HepG2 (cell line): ENCODE measurements at regions of chr2 and their contacts with region 1.

Region 1: DNA sequence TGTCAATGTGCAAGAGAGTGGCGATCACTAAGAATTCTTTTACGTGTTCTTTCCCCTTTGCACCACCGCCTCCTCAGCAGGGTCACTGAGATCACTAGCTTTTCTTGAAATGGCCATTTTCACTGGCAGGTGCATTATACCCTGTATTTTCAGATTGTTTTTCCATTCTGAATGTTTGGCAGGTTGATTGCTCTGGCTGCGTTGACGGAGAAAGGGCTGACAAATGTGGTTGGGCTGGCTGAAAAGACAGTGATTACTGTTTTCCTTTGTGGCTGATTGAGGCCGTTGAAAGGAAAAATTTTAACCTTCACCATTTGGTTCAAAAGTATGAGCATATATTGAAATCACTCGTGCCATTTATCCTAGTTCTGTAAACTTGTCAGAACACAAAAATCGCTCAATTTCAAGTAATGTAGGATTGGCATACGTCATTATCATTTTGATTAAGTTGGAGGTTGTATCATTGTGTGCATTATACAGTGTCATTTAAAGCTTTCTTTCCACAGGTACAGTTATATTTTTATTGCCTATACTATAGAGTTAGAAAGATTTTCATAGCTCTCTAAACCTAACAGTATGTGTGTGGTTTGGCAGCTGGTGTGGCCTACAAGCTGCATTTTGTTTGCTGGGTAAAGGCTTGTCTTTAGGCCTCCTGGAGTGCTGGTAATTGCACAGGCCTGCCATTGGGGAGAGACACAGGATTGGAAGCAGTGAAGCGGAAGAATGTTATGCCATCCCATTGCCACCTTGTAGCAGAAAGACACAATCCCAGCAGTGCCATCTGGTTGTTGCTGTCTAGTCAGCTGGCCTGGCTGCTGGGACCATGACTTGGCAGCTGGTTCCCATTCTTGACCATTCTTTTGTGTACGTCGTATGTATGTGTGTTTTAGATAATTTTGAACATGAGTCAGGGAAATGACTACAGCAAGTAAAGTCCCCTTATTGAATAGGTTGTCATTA is 36.7 kb downstream of the DYNC1I2 start:
- DNase-seq: peak; percentile 12
- ATAC-seq: peak; percentile 75
- H3K4me3 ChIP-seq: no peak overlapping the region
- H3K27ac ChIP-seq: no peak overlapping the region
- H3K4me1 ChIP-seq: peaks cover 23% of the 10 kb centered on the region
- H3K27me3 ChIP-seq: no peaks in the 10 kb centered on the region
- CTCF ChIP-seq: peak; percentile 60
- EP300 ChIP-seq: no peak
- POLR2A ChIP-seq: no peak
- RAD21 ChIP-seq: peak; percentile 26; the same call in 1 of the 2 replicates

Region 2: GRCh38 chr2:171735991-171736710 is 12.1 kb after region 1 on chr2:
- CTCF ChIA-PET with region 1: no interaction called
- POLR2A ChIA-PET with region 1: no interaction called
- in situ Hi-C with region 1: no loop called
- intact Hi-C with region 1: no loop called
- DNase-seq: peak; percentile 6
- ATAC-seq: no peak
- H3K4me3 ChIP-seq: no peak overlapping the region
- H3K27ac ChIP-seq: no peak overlapping the region
- H3K4me1 ChIP-seq: peaks cover 14% of the 10 kb centered on the region
- H3K27me3 ChIP-seq: no peaks in the 10 kb centered on the region
- CTCF ChIP-seq: no peak
- EP300 ChIP-seq: no peak
- POLR2A ChIP-seq: no peak
- RAD21 ChIP-seq: no peak

Region 3: GRCh38 chr2:171787333-171788072 is 63.5 kb after region 1 on chr2:
- CTCF ChIA-PET with region 1: no interaction called
- POLR2A ChIA-PET with region 1: interaction called, 7 read pairs
- in situ Hi-C with region 1: no loop called
- intact Hi-C with region 1: loop called (anchors 10 kb)
- DNase-seq: peak; percentile 33
- ATAC-seq: peak; percentile 75
- H3K4me3 ChIP-seq: no peak overlapping the region
- H3K27ac ChIP-seq: peak overlapping the region; percentile 5
- H3K4me1 ChIP-seq: peaks cover 26% of the 10 kb centered on the region
- H3K27me3 ChIP-seq: no peaks in the 10 kb centered on the region
- CTCF ChIP-seq: peak; percentile 22; the same call in 1 of the 2 replicates
- EP300 ChIP-seq: peak in 1 of 2 experiments; percentile 75; a peak in 2 of 4 replicates
- POLR2A ChIP-seq: no peak
- RAD21 ChIP-seq: no peak